Sigmoid colon (tissue), 7 donors: ENCODE measurements at regions of chr12 and their contacts with region 1.

Region 1: GRCh38 chr12:31267966-31268365 is 58.0 kb downstream of the SINHCAF start:
- DNase-seq: no peak
- H3K4me3 ChIP-seq: no peak overlapping the region
- H3K27ac ChIP-seq: no peak overlapping the region
- H3K4me1 ChIP-seq: peaks cover 0 to 15% (median 0%) of the 10 kb centered on the region in 4 donors
- H3K27me3 ChIP-seq: no peaks in the 10 kb centered on the region
- CTCF ChIP-seq: no peak
- EP300 ChIP-seq: no peak
- POLR2A ChIP-seq: no peak

Region 2: GRCh38 chr12:31250179-31250578 is 17.8 kb before region 1 on chr12:
- intact Hi-C with region 1: loop called (anchors 2 kb)
- DNase-seq: no peak
- H3K4me3 ChIP-seq: no peak overlapping the region
- H3K27ac ChIP-seq: no peak overlapping the region
- H3K4me1 ChIP-seq: no peaks in the 10 kb centered on the region
- H3K27me3 ChIP-seq: peaks cover 0 to 4% (median 0%) of the 10 kb centered on the region in 3 donors
- CTCF ChIP-seq: no peak
- EP300 ChIP-seq: no peak
- POLR2A ChIP-seq: no peak